Head of caudate nucleus (tissue), 42 donors: ENCODE measurements at regions of chr20 and their contacts with region 1.

Region 1: GRCh38 chr20:46562373-46563169 is 12.1 kb upstream of the OCSTAMP start:
- DNase-seq: peak; percentile 63 to 96 (median 86)

Region 2: GRCh38 chr20:46394872-46395760 is 167.5 kb before region 1 on chr20:
- intact Hi-C with region 1: no loop called
- DNase-seq: peak in 12 of 42 donors; percentile 21 to 71 (median 40)

Region 3: GRCh38 chr20:46512943-46513844 is 49.4 kb before region 1 on chr20 and contains the start of gene ZNF334:
- intact Hi-C with region 1: no loop called
- DNase-seq: peak; percentile 18 to 88 (median 74)

Region 4: DNA sequence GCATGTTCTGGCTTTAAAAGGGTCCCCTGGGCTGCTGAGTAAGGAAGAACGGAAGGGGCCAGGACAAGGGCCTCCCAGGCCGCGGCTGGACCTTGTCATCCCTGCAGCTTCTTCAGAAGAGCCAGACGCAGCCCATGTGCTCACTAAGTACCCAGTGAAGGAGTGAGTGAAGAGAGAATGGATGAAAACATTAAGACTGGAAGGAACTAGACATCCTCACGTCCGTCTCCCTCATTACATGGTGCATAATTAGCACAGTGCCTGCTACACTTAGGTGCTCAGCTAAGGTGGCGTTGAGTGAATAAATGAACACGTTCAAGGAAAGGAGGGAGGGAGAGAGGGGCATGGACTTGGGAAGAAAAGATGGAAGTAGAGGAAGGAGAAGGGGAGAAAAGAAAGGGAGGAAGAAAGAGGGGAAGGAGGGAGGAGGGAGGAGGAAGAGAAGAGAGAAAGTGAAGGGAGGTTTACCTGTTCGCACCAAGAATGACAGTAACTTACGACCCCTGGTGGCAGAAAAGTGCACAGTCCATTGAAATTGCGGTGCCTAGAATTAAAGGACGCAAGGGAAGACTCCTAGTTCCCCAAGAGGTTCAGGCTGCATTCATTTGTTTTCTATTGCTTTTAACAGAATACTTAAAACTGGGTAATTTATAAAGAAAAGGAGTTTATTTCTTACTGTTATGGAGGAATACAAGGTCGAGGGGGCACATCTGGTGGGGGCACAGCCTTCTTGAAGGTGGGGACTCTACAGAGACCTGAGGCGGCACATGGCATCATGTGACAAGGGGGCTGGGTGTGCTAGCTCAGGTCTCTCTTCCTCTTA is 118.7 kb after region 1 on chr20:
- intact Hi-C with region 1: loop called (anchors 5 kb)
- DNase-seq: peak; percentile 14 to 93 (median 79)